IMR-90 (cell line): ENCODE measurements at regions of chr10 and their contacts with region 1.

Region 1: DNA sequence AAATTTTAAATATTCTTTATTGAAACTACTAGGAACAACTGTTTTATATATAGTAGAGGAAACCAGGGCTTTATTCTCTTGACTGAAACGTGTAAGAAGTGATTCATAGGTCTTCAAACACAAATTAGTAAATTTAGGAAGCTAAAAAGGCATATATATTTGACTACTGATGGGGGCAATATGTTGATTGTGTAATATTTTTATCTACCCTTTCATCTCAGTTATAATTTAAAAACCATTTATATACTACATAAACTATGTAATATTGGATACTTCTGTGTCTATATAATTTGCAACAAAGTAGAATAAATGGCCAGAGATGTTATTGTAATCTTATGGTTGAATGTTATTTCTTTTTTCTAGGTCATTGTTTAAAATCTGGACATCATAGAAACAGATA is 269.3 kb upstream of the KAT6B start:
- DNase-seq: no peak
- ATAC-seq: no peak
- H3K4me3 ChIP-seq: no peak overlapping the region
- H3K27ac ChIP-seq: no peak overlapping the region
- H3K4me1 ChIP-seq: no peaks in the 10 kb centered on the region
- H3K27me3 ChIP-seq: no peaks in the 10 kb centered on the region
- CTCF ChIP-seq: no peak
- POLR2A ChIP-seq: no peak
- RAD21 ChIP-seq: no peak

Region 2: GRCh38 chr10:73926152-73926764 is 630.8 kb before region 1 on chr10:
- CTCF ChIA-PET with region 1: no interaction called
- POLR2A ChIA-PET with region 1: no interaction called
- dilution Hi-C with region 1: no loop called
- in situ Hi-C with region 1: no loop called
- intact Hi-C with region 1: no loop called
- DNase-seq: no peak
- ATAC-seq: no peak
- H3K4me3 ChIP-seq: no peak overlapping the region
- H3K27ac ChIP-seq: no peak overlapping the region
- H3K4me1 ChIP-seq: peaks cover 7% of the 10 kb centered on the region
- H3K27me3 ChIP-seq: no peaks in the 10 kb centered on the region
- CTCF ChIP-seq: no peak
- POLR2A ChIP-seq: no peak
- RAD21 ChIP-seq: no peak

Region 3: DNA sequence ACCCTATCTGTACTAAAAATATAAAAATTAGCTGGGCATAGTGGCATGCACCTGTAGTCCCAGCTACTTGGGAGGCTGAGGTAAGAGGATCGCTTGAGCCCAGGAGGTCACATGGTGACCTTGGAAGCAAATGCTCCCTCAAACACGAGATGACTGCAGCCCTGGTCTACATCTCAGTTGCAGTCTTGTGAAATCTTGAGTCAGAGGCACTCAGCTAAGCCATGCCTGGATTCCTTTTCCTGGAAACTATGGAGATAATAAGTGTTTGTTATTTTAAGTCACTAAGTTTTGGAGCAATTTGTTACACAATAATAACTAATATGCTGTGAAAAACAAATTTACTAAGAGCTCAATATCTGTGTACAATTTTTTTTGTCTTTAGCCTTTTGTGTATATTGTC is 15.0 kb before region 1 on chr10:
- CTCF ChIA-PET with region 1: no interaction called
- POLR2A ChIA-PET with region 1: no interaction called
- dilution Hi-C with region 1: no loop called
- in situ Hi-C with region 1: no loop called
- intact Hi-C with region 1: no loop called
- DNase-seq: peak; percentile 93
- ATAC-seq: peak; percentile 91
- H3K4me3 ChIP-seq: no peak overlapping the region
- H3K27ac ChIP-seq: peak overlapping the region; percentile 58; the same call in 1 of the 2 replicates
- H3K4me1 ChIP-seq: peaks cover 7% of the 10 kb centered on the region; the same call in 1 of the 2 replicates
- H3K27me3 ChIP-seq: no peaks in the 10 kb centered on the region
- CTCF ChIP-seq: no peak
- POLR2A ChIP-seq: no peak
- RAD21 ChIP-seq: no peak

Region 4: DNA sequence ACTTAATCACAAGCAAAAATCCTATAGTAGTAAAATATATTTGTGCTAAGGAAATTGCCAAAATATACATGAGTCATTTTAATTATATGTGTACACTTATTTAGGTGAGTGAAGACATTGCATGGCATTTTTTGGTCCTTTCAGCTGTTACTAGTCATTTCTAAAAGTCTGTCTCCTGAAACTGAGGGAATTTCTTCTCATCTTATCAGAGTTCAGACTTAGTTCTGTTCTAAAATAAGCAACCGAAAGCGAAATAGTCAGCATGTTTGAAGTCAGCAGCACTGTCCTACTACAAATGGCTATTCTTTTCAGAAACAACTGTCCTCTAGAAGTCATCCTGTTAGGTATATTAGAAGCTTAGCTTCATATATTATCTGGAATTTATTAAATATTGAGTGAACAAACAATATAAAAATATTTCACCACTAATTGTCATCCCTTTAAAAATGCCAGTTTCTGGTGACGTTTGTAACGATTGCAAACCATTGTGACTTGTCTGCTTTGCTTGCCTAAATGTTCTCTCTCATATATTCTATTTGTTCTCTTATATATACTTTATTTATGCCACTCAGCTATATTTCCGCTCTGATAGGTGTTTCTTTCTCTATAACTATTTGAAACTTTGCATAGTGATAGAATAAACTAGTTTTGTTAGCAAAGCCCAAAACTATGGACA is 41.9 kb after region 1 on chr10:
- CTCF ChIA-PET with region 1: no interaction called
- POLR2A ChIA-PET with region 1: interaction called, 15 read pairs
- dilution Hi-C with region 1: no loop called
- in situ Hi-C with region 1: no loop called
- intact Hi-C with region 1: no loop called
- DNase-seq: peak; percentile 47
- ATAC-seq: peak; percentile 44; the same call in 1 of the 2 replicates
- H3K4me3 ChIP-seq: no peak overlapping the region
- H3K27ac ChIP-seq: no peak overlapping the region
- H3K4me1 ChIP-seq: peaks cover under 1% of the 10 kb centered on the region; the same call in 1 of the 2 replicates
- H3K27me3 ChIP-seq: no peaks in the 10 kb centered on the region
- CTCF ChIP-seq: no peak
- POLR2A ChIP-seq: no peak
- RAD21 ChIP-seq: no peak